GM10248 (cell line): ENCODE measurements at regions of chr20 and their contacts with region 1.

Region 1: GRCh38 chr20:21048841-21049273 is 57.3 kb downstream of the LINC00237 start:
- DNase-seq: peak; percentile 71
- CTCF ChIP-seq: peak; percentile 77

Region 2: GRCh38 chr20:21033817-21034216 is 15.0 kb before region 1 on chr20:
- CTCF ChIA-PET with region 1: interaction called, 31 read pairs
- POLR2A ChIA-PET with region 1: no interaction called
- DNase-seq: no peak
- CTCF ChIP-seq: no peak